Heart left ventricle (tissue), 16 donors: ENCODE measurements at regions of chr10 and their contacts with region 1.

Region 1: DNA sequence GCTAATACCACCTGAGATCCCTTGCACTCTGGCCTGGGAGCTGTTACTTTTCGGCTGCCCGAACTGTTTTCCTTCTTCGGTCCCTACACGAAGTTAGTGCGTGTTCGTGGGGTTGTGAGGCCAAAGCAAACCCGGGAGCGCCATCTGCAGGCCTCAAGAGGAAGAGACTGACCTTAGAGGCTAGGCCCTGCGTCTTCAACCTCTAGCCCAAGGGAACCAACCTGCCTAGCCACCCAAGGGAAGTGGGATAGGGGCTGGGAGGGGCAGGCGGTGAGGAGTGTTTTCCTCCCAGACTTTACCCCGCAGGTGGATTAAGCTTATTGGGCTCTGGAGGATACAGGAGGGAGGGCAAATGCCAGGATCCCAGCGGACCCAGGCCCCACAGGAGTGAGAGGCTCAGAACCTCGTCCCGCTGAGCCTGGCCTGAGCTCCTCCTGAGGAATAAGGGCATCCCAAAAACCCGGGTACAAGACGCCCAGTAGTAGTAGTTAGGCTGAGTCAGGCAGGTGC is 1.7 kb upstream of the PAX2 start:
- DNase-seq: peak in 1 of 5 donors; percentile 31
- ATAC-seq: peak in 3 of 4 donors; percentile 57 to 69 (median 58)
- H3K4me3 ChIP-seq: no peak overlapping the region
- H3K27ac ChIP-seq: no peak overlapping the region
- H3K4me1 ChIP-seq: peaks cover 0 to 71% (median 35%) of the 10 kb centered on the region in 12 donors
- H3K27me3 ChIP-seq: peaks cover 77 to 100% (median 100%) of the 10 kb centered on the region in 9 donors
- CTCF ChIP-seq: peak; percentile 10 to 58 (median 50)
- POLR2A ChIP-seq: no peak

Region 2: GRCh38 chr10:100562008-100562711 is 181.5 kb before region 1 on chr10:
- intact Hi-C with region 1: loop called in 5 of 10 experiments (anchors 5 to 10 kb)
- DNase-seq: peak; percentile 36 to 78 (median 50)
- ATAC-seq: peak; percentile 73 to 86 (median 85)
- H3K4me3 ChIP-seq: peak overlapping the region in 6 of 12 donors; percentile 3 to 30 (median 7)
- H3K27ac ChIP-seq: no peak overlapping the region
- H3K4me1 ChIP-seq: peaks cover 0 to 15% (median 10%) of the 10 kb centered on the region in 12 donors
- H3K27me3 ChIP-seq: peaks cover 6 to 57% (median 43%) of the 10 kb centered on the region in 9 donors
- CTCF ChIP-seq: peak; percentile 47 to 78 (median 70)
- POLR2A ChIP-seq: no peak

Region 3: DNA sequence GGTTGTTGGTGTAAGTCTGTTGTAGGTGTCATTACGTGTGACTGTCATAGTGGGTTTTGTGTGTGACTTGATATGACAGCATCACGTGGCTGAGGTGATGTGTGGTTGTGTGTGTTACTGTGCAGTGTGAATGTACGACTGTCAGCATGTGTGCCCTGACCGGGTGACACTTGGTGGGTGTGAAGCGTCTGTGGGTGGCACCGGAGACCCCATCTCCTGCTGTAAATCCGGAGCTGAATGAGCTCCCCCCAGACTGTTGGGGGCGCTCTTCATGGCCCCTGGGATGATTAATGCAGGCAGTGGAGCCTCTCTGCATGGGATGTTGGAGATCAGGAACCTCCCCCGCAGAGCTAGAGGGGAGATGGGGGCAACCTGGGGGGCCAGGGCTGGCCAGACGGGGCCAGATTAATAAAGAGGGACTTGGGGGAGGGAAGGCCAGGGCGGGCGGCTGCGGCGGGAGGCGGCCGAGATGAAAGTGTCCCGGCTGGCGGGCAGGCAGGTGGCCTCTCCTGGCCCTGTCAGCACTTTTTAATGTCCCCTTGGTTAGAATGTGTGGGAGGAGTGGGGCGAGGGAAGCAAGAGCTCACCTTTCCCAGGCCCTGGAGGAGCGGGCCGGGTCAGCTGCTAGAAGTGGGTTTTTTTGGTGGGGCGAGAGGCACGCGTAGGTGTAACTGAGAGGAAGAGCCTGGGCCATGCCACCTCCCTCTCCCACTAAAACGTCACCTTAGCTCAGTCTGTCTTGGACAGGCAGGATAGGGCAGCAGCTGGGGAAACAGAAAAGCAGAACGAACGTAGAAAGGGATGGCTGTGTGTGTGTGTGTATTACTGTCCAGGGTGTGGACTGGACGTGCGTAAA is 173.8 kb before region 1 on chr10:
- intact Hi-C with region 1: loop called in 5 of 10 experiments (anchors 5 to 10 kb)
- DNase-seq: no peak
- ATAC-seq: no peak
- H3K4me3 ChIP-seq: no peak overlapping the region
- H3K27ac ChIP-seq: no peak overlapping the region
- H3K4me1 ChIP-seq: no peaks in the 10 kb centered on the region
- H3K27me3 ChIP-seq: peaks cover 13 to 83% (median 49%) of the 10 kb centered on the region in 9 donors
- CTCF ChIP-seq: no peak
- POLR2A ChIP-seq: no peak

Region 4: GRCh38 chr10:100621360-100622205 is 122.1 kb before region 1 on chr10:
- intact Hi-C with region 1: no loop called
- DNase-seq: no peak
- ATAC-seq: peak in 1 of 4 donors; percentile 21
- H3K4me3 ChIP-seq: no peak overlapping the region
- H3K27ac ChIP-seq: no peak overlapping the region
- H3K4me1 ChIP-seq: no peaks in the 10 kb centered on the region
- H3K27me3 ChIP-seq: peaks cover 14 to 94% (median 43%) of the 10 kb centered on the region in 9 donors
- CTCF ChIP-seq: no peak
- POLR2A ChIP-seq: no peak